AG04449 (cell line): ENCODE measurements at regions of chr10 and their contacts with region 1.

Region 1: GRCh38 chr10:78211561-78212051 is 177.9 kb downstream of the RPS24 start:
- DNase-seq: no peak
- H3K4me3 ChIP-seq: no peak overlapping the region
- CTCF ChIP-seq: peak; percentile 76

Region 2: GRCh38 chr10:78199759-78200158 is 11.8 kb before region 1 on chr10:
- CTCF ChIA-PET with region 1: interaction called, 10 read pairs
- POLR2A ChIA-PET with region 1: no interaction called
- DNase-seq: no peak
- H3K4me3 ChIP-seq: no peak overlapping the region
- CTCF ChIP-seq: no peak